Activated CD4-positive, alpha-beta T cell treated with anti-CD3 and anti-CD28 coated beads for 36 hours (primary cell): ENCODE measurements at regions of chr4 and their contacts with region 1.

Region 1: GRCh38 chr4:18722748-18723191 is 701.2 kb upstream of the LCORL start:
- DNase-seq: no peak
- ATAC-seq: no peak
- H3K4me3 Mint-ChIP-seq: no peak overlapping the region
- H3K27ac Mint-ChIP-seq: no peak overlapping the region
- H3K4me1 Mint-ChIP-seq: no peaks in the 10 kb centered on the region
- H3K27me3 Mint-ChIP-seq: no peaks in the 10 kb centered on the region

Region 2: DNA sequence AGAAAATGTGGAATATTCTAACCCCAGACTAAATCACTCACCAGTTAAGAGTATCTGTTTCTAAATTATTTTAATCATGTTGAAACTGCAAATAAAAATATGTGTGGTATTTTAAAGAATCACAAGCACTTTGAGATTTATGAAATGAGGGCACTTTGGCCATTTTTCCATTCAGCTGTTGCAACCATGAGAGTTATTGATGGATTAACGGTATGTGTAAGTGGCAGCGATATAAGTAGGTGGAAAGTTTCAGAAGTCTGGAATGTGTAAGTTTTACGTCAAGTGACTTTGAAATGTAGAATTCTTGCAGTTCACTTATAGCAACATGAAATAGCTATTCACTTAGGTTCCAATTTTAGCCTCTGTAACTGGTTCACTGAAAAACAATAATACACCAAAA is 623.9 kb after region 1 on chr4:
- CTCF ChIA-PET with region 1: no interaction called
- POLR2A ChIA-PET with region 1: no interaction called
- intact Hi-C with region 1: loop called in 1 of 2 experiments (anchors 10 kb)
- DNase-seq: no peak
- ATAC-seq: no peak
- H3K4me3 Mint-ChIP-seq: no peak overlapping the region
- H3K27ac Mint-ChIP-seq: no peak overlapping the region
- H3K4me1 Mint-ChIP-seq: no peaks in the 10 kb centered on the region
- H3K27me3 Mint-ChIP-seq: no peaks in the 10 kb centered on the region